ENCODE measurements at regions of chr4 and their contacts with region 1.

Region 1: GRCh38 chr4:169619959-169620879 is at the start of gene CLCN3:
- DNase-seq: peak; percentile 97 to 99
- H3K4me3 ChIP-seq: peak within 1 kb of the TSS; percentile 83
- H3K4me1 ChIP-seq: peaks cover 10% of the 10 kb centered on the region; the same call in 1 of the 2 replicates
- H3K27me3 ChIP-seq: no peaks in the 10 kb centered on the region

Region 2: GRCh38 chr4:169730564-169730963 is 110.3 kb after region 1 on chr4:
- in situ Hi-C with region 1: loop called (anchors 10 kb)
- DNase-seq: no peak
- H3K4me3 ChIP-seq: no peak overlapping the region
- H3K4me1 ChIP-seq: peaks cover 10% of the 10 kb centered on the region
- H3K27me3 ChIP-seq: no peaks in the 10 kb centered on the region

Region 3: GRCh38 chr4:170027181-170027829 is 407.1 kb after region 1 on chr4:
- in situ Hi-C with region 1: loop called (anchors 25 kb)
- DNase-seq: peak; percentile 86 to 97
- H3K4me3 ChIP-seq: peak overlapping the region; percentile 76
- H3K4me1 ChIP-seq: peaks cover 11% of the 10 kb centered on the region
- H3K27me3 ChIP-seq: no peaks in the 10 kb centered on the region

Region 4: GRCh38 chr4:170057866-170058265 is 437.6 kb after region 1 on chr4:
- in situ Hi-C with region 1: no loop called
- DNase-seq: no peak
- H3K4me3 ChIP-seq: no peak overlapping the region
- H3K4me1 ChIP-seq: no peaks in the 10 kb centered on the region
- H3K27me3 ChIP-seq: no peaks in the 10 kb centered on the region